ENCODE measurements at regions of chr6 and their contacts with region 1.

Region 1: DNA sequence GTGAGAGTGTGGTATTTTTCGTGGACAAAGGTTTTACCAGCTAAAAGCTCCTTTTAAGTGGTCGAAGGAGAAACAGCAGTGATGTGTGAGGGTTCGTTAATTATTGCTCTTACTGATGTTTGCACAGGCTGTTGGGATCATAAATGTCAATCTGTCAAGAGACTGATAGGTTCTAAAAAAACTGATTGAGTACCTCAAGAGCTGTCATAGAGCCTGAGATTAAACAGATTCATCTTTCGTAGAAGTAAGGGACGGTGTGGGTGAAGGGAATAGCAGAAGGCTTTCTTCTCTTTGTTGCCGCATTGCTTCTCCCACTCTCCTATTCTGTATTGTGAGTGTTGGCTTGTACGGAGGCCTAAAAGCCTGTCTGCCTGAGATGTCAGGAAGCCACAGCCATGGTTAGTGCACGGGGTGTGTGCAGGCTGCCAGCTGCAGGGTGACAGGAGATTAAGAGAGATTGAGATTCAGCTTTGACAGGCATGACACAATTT is 291.0 kb downstream of the ZFAND3 start:
- DNase-seq: peak; percentile 48 to 66
- H3K4me3 ChIP-seq: no peak overlapping the region
- H3K4me3 Mint-ChIP-seq: peak overlapping the region; percentile 25
- H3K27ac Mint-ChIP-seq: peak overlapping the region; percentile 11
- H3K4me1 ChIP-seq: peaks cover 29% of the 10 kb centered on the region
- H3K4me1 Mint-ChIP-seq: peaks cover 32% of the 10 kb centered on the region
- H3K27me3 ChIP-seq: no peaks in the 10 kb centered on the region
- H3K27me3 Mint-ChIP-seq: no peaks in the 10 kb centered on the region
- CTCF ChIP-seq: no peak

Region 2: DNA sequence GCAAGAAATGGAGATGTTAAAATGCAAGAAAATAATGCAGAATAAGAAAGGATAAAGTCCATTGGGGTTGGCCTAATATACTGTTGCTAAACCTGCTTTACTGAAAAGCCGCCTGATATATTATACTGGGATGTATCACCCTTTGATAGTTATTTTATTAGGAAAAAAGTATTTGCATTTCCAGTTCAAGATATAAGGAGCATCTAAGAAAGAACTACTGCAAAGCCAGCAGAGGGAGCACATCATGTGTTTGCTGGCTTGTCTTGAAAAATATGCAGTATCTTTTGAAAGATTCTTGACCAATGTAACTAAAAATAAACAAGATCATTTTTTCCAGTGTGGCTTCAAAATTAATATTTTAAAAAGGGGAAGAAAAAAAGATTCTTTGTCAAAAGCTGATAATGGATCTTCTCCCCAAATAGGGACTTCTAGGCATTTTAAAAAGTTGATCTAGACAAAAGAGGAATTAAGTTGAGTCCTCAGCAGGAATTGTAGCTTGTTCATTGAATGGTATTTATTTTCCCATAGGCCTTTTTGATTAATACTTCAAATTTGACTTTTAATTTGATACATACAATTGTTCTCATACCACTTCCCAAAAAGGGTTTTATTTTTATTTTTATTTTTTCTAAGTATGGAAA is 76.1 kb before region 1 on chr6:
- CTCF ChIA-PET with region 1: no interaction called
- POLR2A ChIA-PET with region 1: no interaction called
- intact Hi-C with region 1: loop called (anchors 10 kb)
- DNase-seq: peak in 1 of 2 experiments; percentile 23
- H3K4me3 ChIP-seq: no peak overlapping the region
- H3K4me3 Mint-ChIP-seq: no peak overlapping the region
- H3K27ac Mint-ChIP-seq: no peak overlapping the region
- H3K4me1 ChIP-seq: no peaks in the 10 kb centered on the region
- H3K4me1 Mint-ChIP-seq: no peaks in the 10 kb centered on the region
- H3K27me3 ChIP-seq: no peaks in the 10 kb centered on the region
- H3K27me3 Mint-ChIP-seq: no peaks in the 10 kb centered on the region
- CTCF ChIP-seq: peak; percentile 14 to 68

Measured in Caco-2 (cell line).